Upper lobe of right lung (tissue), 1 donor: ENCODE measurements at regions of chr5 and their contacts with region 1.

Region 1: DNA sequence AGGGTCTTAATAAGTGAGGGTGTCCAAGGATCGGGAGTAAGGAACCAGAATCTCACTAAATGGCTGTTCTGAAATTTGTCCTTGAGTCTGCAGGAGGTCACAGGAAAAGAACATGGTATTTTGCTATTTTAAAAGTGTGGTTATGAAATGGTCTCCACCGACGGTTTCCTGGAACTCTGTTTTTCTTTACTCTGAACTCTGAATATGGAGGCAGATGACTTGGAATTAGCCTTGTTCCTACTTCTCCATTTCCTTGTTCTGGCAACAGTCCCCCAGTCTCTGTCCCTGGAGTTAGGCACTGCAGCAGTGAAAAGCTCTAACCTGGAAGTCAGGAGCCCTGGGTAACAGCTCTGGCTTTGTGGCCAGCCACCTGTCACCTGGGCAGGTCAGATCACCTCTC is 46.6 kb upstream of the C5orf58 start:
- DNase-seq: no peak
- ATAC-seq: peak; percentile 41
- H3K4me3 ChIP-seq: no peak overlapping the region
- H3K27ac ChIP-seq: no peak overlapping the region
- H3K4me1 ChIP-seq: no peaks in the 10 kb centered on the region
- H3K27me3 ChIP-seq: no peaks in the 10 kb centered on the region
- CTCF ChIP-seq: no peak

Region 2: DNA sequence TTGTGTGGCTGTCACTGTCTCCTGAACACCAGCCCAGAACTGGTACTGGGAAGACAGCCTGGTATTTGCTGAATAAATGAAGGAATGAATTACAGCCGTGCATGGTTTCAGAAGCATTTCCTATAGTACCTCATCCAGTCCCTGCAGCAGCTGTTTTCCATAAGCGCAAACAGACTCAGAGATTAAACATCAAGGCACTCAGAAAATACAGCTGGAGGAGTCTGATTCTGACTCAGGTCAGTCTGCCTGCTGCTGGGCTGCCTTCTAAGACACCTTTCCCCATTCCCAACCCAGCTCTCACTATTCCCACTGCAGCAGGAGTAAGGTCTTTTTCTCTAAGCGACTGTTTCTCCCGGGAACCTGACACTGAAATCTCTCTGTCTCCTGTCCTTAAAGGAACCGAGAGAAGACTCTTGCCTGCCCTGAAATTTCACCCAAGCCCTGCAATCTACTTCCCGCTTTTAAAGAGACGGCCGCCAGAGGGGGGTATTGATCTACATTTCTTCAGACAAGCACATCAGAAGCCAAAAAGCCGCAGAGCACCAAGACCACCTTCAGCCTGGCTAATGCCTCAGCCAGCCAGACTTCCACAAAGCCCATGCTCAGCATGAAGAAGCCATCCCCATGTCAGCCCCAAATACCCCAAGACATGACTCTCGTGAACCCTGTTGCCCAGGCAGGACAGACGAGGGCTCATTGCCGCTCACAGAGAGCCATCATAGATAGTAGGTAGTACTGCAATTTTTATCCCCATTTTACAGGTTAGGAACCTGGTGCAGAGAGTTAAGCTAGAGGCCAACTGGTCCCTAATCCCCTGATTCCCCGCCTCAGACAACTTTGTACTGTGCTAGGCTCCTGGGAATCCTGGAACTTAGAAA is 85.9 kb before region 1 on chr5:
- intact Hi-C with region 1: loop called (anchors 5 kb)
- DNase-seq: no peak
- ATAC-seq: peak; percentile 70
- H3K4me3 ChIP-seq: no peak overlapping the region
- H3K27ac ChIP-seq: no peak overlapping the region
- H3K4me1 ChIP-seq: peaks cover 14% of the 10 kb centered on the region
- H3K27me3 ChIP-seq: no peaks in the 10 kb centered on the region
- CTCF ChIP-seq: peak; percentile 68